PC-9 (cell line): ENCODE measurements at regions of chr15 and their contacts with region 1.

Region 1: GRCh38 chr15:32956006-32956405 is 238.2 kb downstream of the GREM1 start:
- DNase-seq: peak in 1 of 2 experiments; percentile 1
- H3K4me3 ChIP-seq: no peak overlapping the region
- H3K27ac ChIP-seq: no peak overlapping the region
- H3K4me1 ChIP-seq: no peaks in the 10 kb centered on the region
- H3K27me3 ChIP-seq: no peaks in the 10 kb centered on the region
- CTCF ChIP-seq: peak; percentile 52

Region 2: GRCh38 chr15:32663671-32664070 is 292.3 kb before region 1 on chr15:
- CTCF ChIA-PET with region 1: no interaction called
- POLR2A ChIA-PET with region 1: no interaction called
- intact Hi-C with region 1: loop called (anchors 2 kb)
- DNase-seq: no peak
- H3K4me3 ChIP-seq: no peak overlapping the region
- H3K27ac ChIP-seq: no peak overlapping the region
- H3K4me1 ChIP-seq: peaks cover 12% of the 10 kb centered on the region
- H3K27me3 ChIP-seq: no peaks in the 10 kb centered on the region
- CTCF ChIP-seq: no peak

Region 3: GRCh38 chr15:32717426-32718226 is 238.4 kb before region 1 on chr15 and contains the start of gene GREM1:
- CTCF ChIA-PET with region 1: no interaction called
- POLR2A ChIA-PET with region 1: no interaction called
- intact Hi-C with region 1: no loop called
- DNase-seq: no peak
- H3K4me3 ChIP-seq: no peak within 1 kb of the TSS
- H3K27ac ChIP-seq: no peak within 1 kb of the TSS
- H3K4me1 ChIP-seq: no peaks in the 10 kb centered on the region
- H3K27me3 ChIP-seq: no peaks in the 10 kb centered on the region
- CTCF ChIP-seq: no peak
- total RNA-seq, gene GREM1: 0.39 and 0.48 TPM in 2 replicates

Region 4: GRCh38 chr15:32844118-32844711 is 111.8 kb before region 1 on chr15:
- CTCF ChIA-PET with region 1: no interaction called
- POLR2A ChIA-PET with region 1: no interaction called
- intact Hi-C with region 1: loop called (anchors 2 kb)
- DNase-seq: no peak
- H3K4me3 ChIP-seq: no peak overlapping the region
- H3K27ac ChIP-seq: no peak overlapping the region
- H3K4me1 ChIP-seq: peaks cover 7% of the 10 kb centered on the region
- H3K27me3 ChIP-seq: no peaks in the 10 kb centered on the region
- CTCF ChIP-seq: peak; percentile 62

Region 5: DNA sequence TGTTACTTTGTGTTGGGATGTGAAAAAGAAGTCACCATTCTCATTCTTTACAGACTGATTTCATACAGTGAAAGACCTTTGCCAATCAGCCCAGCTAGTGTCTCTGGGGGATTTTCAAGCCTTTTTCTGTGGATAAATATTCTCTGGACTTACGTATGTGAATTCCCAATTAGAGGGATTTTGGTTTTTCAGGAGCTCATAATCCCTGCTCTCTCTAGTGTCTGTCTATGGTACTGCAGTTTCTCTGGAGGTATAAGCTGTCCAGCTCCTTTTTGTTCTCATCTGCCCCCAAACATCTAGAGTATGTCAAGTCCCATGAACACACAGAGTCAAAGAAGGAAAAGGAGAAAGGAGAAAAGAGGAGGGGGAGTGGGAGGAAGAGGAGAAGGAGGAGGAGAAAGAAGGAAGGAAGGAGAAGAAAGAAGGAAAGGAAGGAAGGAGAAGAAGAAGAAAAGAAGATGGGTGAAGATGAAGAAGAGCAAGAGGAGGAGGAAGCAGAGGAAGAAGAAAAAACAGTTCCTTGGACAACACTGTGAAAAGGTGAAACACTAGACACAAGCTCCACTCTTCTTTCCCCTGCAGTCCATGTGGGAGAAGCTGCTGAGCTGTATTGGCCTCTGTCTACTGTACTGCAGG is 19.6 kb before region 1 on chr15:
- CTCF ChIA-PET with region 1: interaction called, 3 read pairs
- POLR2A ChIA-PET with region 1: interaction called, 17 read pairs
- intact Hi-C with region 1: no loop called
- DNase-seq: no peak
- H3K4me3 ChIP-seq: no peak overlapping the region
- H3K27ac ChIP-seq: no peak overlapping the region
- H3K4me1 ChIP-seq: no peaks in the 10 kb centered on the region
- H3K27me3 ChIP-seq: no peaks in the 10 kb centered on the region
- CTCF ChIP-seq: peak; percentile 54